ENCODE measurements at regions of chr15 and their contacts with region 1.

Region 1: GRCh38 chr15:78872972-78873792 is 492 bp downstream of the MORF4L1 start:
- DNase-seq: peak; percentile 73 to 97 (median 88)
- ATAC-seq: peak; percentile 63
- H3K4me3 ChIP-seq: peak overlapping the region; percentile 97 to 100
- H3K4me3 Mint-ChIP-seq: peak overlapping the region; percentile 97
- H3K27ac ChIP-seq: peak overlapping the region; percentile 100
- H3K27ac Mint-ChIP-seq: peak overlapping the region; percentile 99
- H3K4me1 ChIP-seq: peaks cover 37% of the 10 kb centered on the region
- H3K4me1 Mint-ChIP-seq: peaks cover 40% of the 10 kb centered on the region
- H3K27me3 ChIP-seq: no peaks in the 10 kb centered on the region
- H3K27me3 Mint-ChIP-seq: no peaks in the 10 kb centered on the region
- CTCF ChIP-seq: peak; percentile 28

Region 2: DNA sequence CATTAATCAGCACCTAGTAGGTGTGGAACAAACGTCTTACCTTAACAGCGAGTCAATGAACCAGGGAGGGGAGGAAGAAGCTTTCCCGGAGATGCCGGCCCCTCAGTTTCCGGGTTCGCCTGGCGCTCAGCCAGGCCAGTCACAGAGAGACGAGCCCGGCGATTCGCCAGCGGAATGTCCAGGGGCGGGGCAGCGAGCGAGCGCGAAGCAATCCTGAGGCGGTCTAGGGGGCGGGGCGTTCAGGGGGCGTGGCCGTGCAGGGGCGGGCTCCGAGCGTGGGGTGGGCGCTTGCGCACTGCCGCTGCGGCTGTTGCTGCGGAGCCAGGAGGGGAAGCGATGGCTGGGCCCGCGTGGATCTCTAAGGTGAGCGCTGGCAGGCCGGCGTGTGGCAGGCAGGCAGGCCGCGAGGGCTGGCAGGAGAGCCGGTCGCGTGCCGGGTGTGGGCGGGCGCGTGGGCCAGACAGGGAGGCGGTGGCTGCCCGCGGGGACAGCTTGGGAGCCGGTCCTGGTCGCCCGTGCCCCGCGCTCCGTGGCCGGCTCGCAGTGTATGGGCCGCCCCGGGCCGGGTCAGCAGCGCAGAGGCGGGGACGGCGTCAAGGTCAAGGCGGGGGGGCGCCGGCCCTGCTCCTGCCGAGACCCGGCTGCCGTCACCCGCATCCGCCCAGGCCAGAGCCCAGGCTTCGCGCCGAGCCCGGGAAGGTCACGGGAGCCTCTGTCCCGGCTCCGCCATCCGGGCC is 723.9 kb before region 1 on chr15 and contains the start of gene IDH3A:
- CTCF ChIA-PET with region 1: no interaction called
- POLR2A ChIA-PET with region 1: no interaction called
- intact Hi-C with region 1: loop called (anchors 2 to 5 kb)
- DNase-seq: peak; percentile 99 to 100 (median 100)
- ATAC-seq: peak; percentile 97
- H3K4me3 ChIP-seq: peak within 1 kb of the TSS; percentile 72 to 81
- H3K4me3 Mint-ChIP-seq: peak within 1 kb of the TSS; percentile 91
- H3K27ac ChIP-seq: peak within 1 kb of the TSS; percentile 65 to 67
- H3K27ac Mint-ChIP-seq: peak within 1 kb of the TSS; percentile 91
- H3K4me1 ChIP-seq: peaks cover 18% of the 10 kb centered on the region
- H3K4me1 Mint-ChIP-seq: peaks cover 44% of the 10 kb centered on the region
- H3K27me3 ChIP-seq: no peaks in the 10 kb centered on the region
- H3K27me3 Mint-ChIP-seq: no peaks in the 10 kb centered on the region
- CTCF ChIP-seq: no peak
- total RNA-seq, gene IDH3A: 54.4 to 61.0 TPM

Region 3: DNA sequence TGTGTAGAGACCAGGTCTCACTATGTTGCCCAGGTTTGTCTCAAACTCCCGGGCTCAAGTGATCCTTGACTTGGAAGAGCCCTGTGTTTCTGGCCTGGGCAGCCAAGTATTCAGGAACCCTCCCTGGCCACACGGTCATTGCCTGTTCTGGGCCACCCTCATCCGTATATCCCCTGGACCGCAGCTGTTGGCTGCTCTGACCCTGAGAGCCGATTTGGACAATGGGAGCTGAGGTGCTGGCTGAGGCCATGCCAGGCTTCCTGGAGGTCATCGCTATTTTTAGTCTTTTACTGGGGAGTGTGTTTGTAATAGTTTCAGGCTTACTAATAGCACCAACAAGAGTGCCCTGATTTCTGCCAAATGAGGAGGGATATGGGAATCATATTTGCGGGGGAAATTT is 122.6 kb before region 1 on chr15:
- CTCF ChIA-PET with region 1: no interaction called
- POLR2A ChIA-PET with region 1: no interaction called
- intact Hi-C with region 1: loop called in 1 of 2 experiments (anchors 5 kb)
- DNase-seq: no peak
- ATAC-seq: no peak
- H3K4me3 ChIP-seq: no peak overlapping the region
- H3K4me3 Mint-ChIP-seq: peak overlapping the region; percentile 19
- H3K27ac ChIP-seq: no peak overlapping the region
- H3K27ac Mint-ChIP-seq: no peak overlapping the region
- H3K4me1 ChIP-seq: peaks cover 8% of the 10 kb centered on the region
- H3K4me1 Mint-ChIP-seq: peaks cover 4% of the 10 kb centered on the region
- H3K27me3 ChIP-seq: no peaks in the 10 kb centered on the region
- H3K27me3 Mint-ChIP-seq: no peaks in the 10 kb centered on the region
- CTCF ChIP-seq: no peak

Region 4: GRCh38 chr15:78811124-78811824 is 61.9 kb before region 1 on chr15 and contains the start of gene ADAMTS7:
- CTCF ChIA-PET with region 1: no interaction called
- POLR2A ChIA-PET with region 1: no interaction called
- intact Hi-C with region 1: loop called in 1 of 2 experiments (anchors 2 kb)
- DNase-seq: peak; percentile 12 to 73 (median 59)
- ATAC-seq: peak; percentile 73
- H3K4me3 ChIP-seq: peak within 1 kb of the TSS; percentile 43 to 48
- H3K4me3 Mint-ChIP-seq: peak within 1 kb of the TSS; percentile 82
- H3K27ac ChIP-seq: no peak within 1 kb of the TSS
- H3K27ac Mint-ChIP-seq: no peak within 1 kb of the TSS
- H3K4me1 ChIP-seq: peaks cover 14% of the 10 kb centered on the region
- H3K4me1 Mint-ChIP-seq: peaks cover 14% of the 10 kb centered on the region
- H3K27me3 ChIP-seq: peaks cover 8 to 16% of the 10 kb centered on the region in 2 experiments
- H3K27me3 Mint-ChIP-seq: peaks cover 44% of the 10 kb centered on the region
- CTCF ChIP-seq: peak; percentile 62
- total RNA-seq, gene ADAMTS7: not detected

Region 5: DNA sequence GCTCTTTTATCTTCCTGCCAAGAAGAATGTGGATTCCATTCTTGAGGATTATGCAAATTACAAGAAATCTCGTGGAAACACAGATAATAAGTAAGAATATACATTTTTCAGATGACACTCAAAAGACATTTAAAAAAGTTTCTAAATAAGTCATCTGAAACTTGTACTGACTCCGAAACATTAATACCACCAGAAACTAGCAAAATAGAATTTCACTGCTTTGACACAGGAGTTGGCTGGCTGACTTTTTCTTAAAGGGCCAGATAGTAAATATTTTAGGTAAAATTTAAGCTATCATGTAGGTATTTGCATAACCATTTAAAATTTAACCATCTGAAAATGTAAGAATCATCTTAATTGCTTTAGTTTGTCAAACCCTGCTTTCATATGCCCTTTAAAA is 20.4 kb after region 1 on chr15:
- CTCF ChIA-PET with region 1: interaction called, 3 read pairs
- POLR2A ChIA-PET with region 1: interaction called, 9 read pairs
- intact Hi-C with region 1: loop called (anchors 2 kb)
- DNase-seq: no peak
- ATAC-seq: no peak
- H3K4me3 ChIP-seq: no peak overlapping the region
- H3K4me3 Mint-ChIP-seq: no peak overlapping the region
- H3K27ac ChIP-seq: no peak overlapping the region
- H3K27ac Mint-ChIP-seq: no peak overlapping the region
- H3K4me1 ChIP-seq: no peaks in the 10 kb centered on the region
- H3K4me1 Mint-ChIP-seq: peaks cover 11% of the 10 kb centered on the region
- H3K27me3 ChIP-seq: no peaks in the 10 kb centered on the region
- H3K27me3 Mint-ChIP-seq: no peaks in the 10 kb centered on the region
- CTCF ChIP-seq: no peak

Measured in CD8-positive, alpha-beta T cell (primary cell).